Mammary epithelial cell (primary cell): ENCODE measurements at regions of chr22 and their contacts with region 1.

Region 1: GRCh38 chr22:37817705-37818408 is 5.3 kb upstream of the GALR3 start:
- DNase-seq: peak; percentile 58
- H3K4me3 ChIP-seq: peak overlapping the region in 1 of 3 experiments; percentile 26
- H3K27ac ChIP-seq: no peak overlapping the region
- H3K4me1 ChIP-seq: peaks cover 7% of the 10 kb centered on the region
- H3K27me3 ChIP-seq: peaks cover 2% of the 10 kb centered on the region
- CTCF ChIP-seq: peak; percentile 81 to 90

Region 2: DNA sequence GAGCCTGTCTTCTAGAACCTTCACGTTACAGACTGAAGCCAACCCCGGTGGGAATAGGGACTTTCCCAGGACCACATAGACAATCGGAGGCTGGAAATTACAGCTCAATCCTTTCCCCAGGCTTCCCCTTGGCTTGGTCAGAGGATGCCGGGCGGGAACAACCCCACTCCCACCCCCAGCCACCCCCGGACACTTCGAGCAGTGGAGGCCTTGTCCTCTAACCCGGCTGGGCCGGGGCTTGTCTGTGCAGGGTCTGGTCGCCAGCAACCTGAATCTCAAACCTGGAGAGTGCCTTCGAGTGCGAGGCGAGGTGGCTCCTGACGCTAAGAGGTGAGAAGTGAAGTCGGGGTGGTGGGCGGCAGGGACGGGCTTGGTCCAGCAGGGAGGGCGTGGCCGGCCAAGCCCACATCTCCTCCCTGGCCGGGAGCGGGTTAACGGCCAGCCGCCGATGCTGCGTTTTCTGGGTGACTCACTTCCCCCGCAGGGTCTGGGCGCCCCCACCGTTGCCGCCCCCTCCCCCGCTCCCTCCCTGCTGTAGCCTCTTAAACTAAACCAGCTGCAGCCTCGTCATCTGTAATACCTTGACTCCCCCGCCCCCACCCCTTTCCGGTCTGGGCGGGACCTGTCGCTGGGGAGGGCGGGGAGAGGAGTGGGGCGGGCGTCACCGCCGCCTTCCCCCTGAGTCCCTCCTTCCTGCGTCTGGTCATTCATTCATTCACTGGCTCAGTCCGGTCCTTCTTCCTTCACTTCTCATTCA is 140.9 kb before region 1 on chr22:
- CTCF ChIA-PET with region 1: no interaction called
- dilution Hi-C with region 1: no loop called
- in situ Hi-C with region 1: no loop called
- intact Hi-C with region 1: no loop called
- DNase-seq: peak; percentile 96
- H3K4me3 ChIP-seq: peak overlapping the region; percentile 67 to 76 (median 72)
- H3K27ac ChIP-seq: peak overlapping the region; percentile 78
- H3K4me1 ChIP-seq: peaks cover 33% of the 10 kb centered on the region
- H3K27me3 ChIP-seq: no peaks in the 10 kb centered on the region
- CTCF ChIP-seq: no peak

Region 3: DNA sequence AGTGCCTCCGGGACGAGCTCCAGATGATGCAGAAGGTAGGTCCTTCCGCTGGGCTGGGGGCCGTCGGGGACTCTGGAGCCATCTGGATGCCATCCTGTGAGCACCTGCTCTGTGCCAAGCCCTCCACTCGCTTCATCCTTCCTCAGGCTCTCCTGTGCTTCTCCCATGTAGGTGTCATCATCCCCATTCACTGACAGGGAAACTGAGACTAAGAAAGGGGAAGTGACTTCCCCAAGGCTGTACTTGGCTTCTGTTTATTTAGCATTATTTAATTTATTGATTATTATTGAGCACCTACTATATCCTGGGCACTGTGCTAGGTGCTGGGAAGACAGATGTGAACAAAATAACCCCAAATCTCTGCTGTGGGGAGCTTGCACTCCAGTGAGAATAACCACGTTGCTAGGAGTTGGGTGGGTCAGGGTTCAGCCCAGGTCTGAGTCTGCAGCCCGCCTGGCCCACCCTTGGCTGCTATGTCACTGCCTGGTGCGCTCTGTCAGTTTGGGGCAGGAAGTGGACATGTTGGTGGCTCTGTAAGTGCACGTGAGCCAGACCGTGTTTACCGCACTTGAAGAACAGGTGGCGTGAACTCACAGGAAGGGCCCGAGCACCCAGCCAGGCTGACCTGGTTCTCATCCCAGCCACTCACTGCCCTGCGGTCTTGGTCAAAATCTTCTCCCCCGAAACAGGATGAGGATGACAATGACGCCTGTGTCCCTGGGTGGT is 46.0 kb before region 1 on chr22:
- CTCF ChIA-PET with region 1: no interaction called
- dilution Hi-C with region 1: loop called (anchors 5 kb)
- in situ Hi-C with region 1: no loop called
- intact Hi-C with region 1: no loop called
- DNase-seq: no peak
- H3K4me3 ChIP-seq: no peak overlapping the region
- H3K27ac ChIP-seq: no peak overlapping the region
- H3K4me1 ChIP-seq: peaks cover 24% of the 10 kb centered on the region
- H3K27me3 ChIP-seq: no peaks in the 10 kb centered on the region
- CTCF ChIP-seq: no peak

Region 4: DNA sequence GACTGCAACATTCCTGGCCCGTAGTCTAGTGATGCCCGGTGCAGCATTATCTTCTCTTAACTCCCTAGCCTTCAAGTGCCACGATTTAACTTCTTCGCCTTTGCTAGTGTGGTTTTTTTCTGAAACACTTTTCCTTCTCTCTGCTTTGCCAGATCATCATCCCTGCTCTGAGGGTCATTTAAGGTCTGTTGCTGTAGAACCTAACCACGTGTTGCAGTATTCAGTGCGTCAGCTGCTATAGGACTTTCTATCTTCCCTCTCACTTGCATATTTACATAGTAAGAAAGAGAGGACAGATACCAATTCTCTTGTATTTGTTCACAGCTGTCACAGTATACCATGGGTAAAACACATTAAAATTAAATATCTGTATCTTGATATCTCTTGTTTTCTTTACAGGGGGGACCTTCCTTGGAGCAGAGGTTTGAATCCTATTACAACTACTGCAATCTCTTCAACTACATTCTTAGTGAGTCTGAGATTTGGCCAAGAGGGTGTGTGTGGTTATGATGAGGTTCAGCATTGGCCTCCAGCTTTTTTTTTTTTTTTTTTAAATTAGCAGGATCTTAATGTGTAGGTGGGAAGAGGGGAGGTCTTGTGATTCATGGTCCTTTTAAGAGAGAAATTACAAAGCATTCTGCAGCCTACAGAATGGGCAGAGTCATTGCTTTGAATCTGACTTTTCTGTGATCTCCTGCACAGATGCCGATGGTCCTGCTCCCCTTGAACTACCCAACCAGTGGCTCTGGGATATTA is 44.9 kb after region 1 on chr22:
- CTCF ChIA-PET with region 1: interaction called, 7 read pairs
- dilution Hi-C with region 1: loop called (anchors 5 kb)
- in situ Hi-C with region 1: no loop called
- intact Hi-C with region 1: loop called (anchors 1 kb)
- DNase-seq: no peak
- H3K4me3 ChIP-seq: no peak overlapping the region
- H3K27ac ChIP-seq: no peak overlapping the region
- H3K4me1 ChIP-seq: no peaks in the 10 kb centered on the region
- H3K27me3 ChIP-seq: no peaks in the 10 kb centered on the region
- CTCF ChIP-seq: no peak

Region 5: GRCh38 chr22:37905534-37906363 is 87.9 kb after region 1 on chr22 and contains the start of gene MICALL1:
- CTCF ChIA-PET with region 1: no interaction called
- dilution Hi-C with region 1: no loop called
- in situ Hi-C with region 1: no loop called
- intact Hi-C with region 1: no loop called
- DNase-seq: peak; percentile 87
- H3K4me3 ChIP-seq: peak within 1 kb of the TSS; percentile 72 to 93 (median 87)
- H3K27ac ChIP-seq: peak within 1 kb of the TSS; percentile 95
- H3K4me1 ChIP-seq: peaks cover 48% of the 10 kb centered on the region
- H3K27me3 ChIP-seq: no peaks in the 10 kb centered on the region
- CTCF ChIP-seq: no peak
- total RNA-seq, gene MICALL1: 247 to 249 TPM

Region 6: DNA sequence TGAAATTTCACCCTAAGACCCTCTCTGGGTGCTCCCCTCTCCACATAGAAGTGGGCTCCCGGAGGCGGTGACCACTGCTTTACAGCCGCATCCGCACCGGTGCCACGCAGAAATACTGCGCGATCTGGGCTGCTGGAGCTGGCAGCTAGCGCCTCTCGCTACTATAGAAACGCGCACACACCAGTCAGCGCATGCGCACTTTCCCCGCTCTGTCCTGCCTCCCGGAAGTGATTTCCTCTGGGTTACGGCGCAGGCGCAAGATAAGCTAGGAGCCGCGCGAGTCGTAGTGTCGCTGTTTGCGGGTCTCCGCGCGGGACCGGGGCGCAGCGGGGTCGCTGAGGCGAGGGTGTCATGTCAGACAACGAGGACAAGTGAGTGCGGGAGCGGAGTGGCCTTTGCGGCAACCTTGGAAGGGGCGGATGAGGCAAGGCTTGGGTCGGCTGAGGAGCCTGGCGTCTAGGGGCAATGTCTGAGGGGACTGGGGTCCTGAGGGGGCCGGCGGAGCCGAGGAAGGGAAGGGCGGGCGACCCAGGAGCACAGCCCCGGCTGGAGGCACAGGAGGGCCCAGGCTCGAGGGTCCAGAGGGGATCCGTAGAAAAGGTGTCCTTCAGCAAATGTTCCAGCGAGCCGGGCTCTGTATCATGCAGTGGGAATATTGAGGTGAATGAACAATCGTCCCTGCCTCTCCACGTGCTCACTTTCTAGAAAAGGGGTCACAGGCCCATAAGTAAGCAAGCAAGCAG is 135.8 kb after region 1 on chr22 and contains the starts of genes C22orf23 and POLR2F:
- CTCF ChIA-PET with region 1: no interaction called
- dilution Hi-C with region 1: loop called (anchors 5 kb)
- in situ Hi-C with region 1: no loop called
- intact Hi-C with region 1: no loop called
- DNase-seq: peak; percentile 89
- H3K4me3 ChIP-seq: peak within 1 kb of the TSS; percentile 67 to 83 (median 71)
- H3K27ac ChIP-seq: peak within 1 kb of the TSS; percentile 57
- H3K4me1 ChIP-seq: peaks cover 21% of the 10 kb centered on the region
- H3K27me3 ChIP-seq: no peaks in the 10 kb centered on the region
- CTCF ChIP-seq: no peak
- total RNA-seq, gene C22orf23: not detected
- total RNA-seq, gene POLR2F: 20.7 to 89.6 TPM

Region 7: GRCh38 chr22:37965940-37966664 is 148.2 kb after region 1 on chr22:
- CTCF ChIA-PET with region 1: no interaction called
- dilution Hi-C with region 1: no loop called
- in situ Hi-C with region 1: no loop called
- intact Hi-C with region 1: loop called (anchors 1 kb)
- DNase-seq: peak; percentile 17
- H3K4me3 ChIP-seq: no peak overlapping the region
- H3K27ac ChIP-seq: no peak overlapping the region
- H3K4me1 ChIP-seq: peaks cover 11% of the 10 kb centered on the region
- H3K27me3 ChIP-seq: no peaks in the 10 kb centered on the region
- CTCF ChIP-seq: no peak

Region 8: GRCh38 chr22:38104084-38104483 is 286.2 kb after region 1 on chr22:
- CTCF ChIA-PET with region 1: no interaction called
- dilution Hi-C with region 1: no loop called
- in situ Hi-C with region 1: no loop called
- intact Hi-C with region 1: no loop called
- DNase-seq: no peak
- H3K4me3 ChIP-seq: no peak overlapping the region
- H3K27ac ChIP-seq: no peak overlapping the region
- H3K4me1 ChIP-seq: no peaks in the 10 kb centered on the region
- H3K27me3 ChIP-seq: no peaks in the 10 kb centered on the region
- CTCF ChIP-seq: peak in 1 of 2 donors; percentile 43